Activated CD8-positive, alpha-beta T cell treated with anti-CD3 and anti-CD28 coated beads, Interleukin-2, amount 10 ng/mL, durations not matched to agents 7 days and 5 days (primary cell): ENCODE measurements at regions of chr17 and their contacts with region 1.

Region 1: DNA sequence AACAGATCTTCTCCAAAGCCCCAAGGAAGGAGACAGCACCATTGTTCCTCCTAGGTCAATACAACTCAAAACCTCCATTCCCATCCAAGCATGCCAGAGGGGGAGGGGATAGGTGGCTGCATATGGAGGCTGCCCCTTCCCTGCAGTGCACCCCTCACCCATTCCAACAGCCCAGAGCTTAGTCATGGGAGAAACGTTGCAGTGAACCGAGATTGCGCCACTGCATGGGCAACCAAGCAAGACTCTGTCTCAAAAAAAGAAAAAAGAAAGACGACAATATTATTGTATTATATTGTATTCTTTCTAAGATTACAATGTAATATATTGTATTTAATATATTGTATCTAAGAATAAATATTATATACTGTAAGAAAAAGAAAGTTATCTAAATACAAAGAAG is 36.4 kb upstream of the CD300E start:
- DNase-seq: no peak
- ATAC-seq: no peak
- H3K4me3 Mint-ChIP-seq: no peak overlapping the region
- H3K27ac Mint-ChIP-seq: no peak overlapping the region
- H3K4me1 Mint-ChIP-seq: peaks cover 5% of the 10 kb centered on the region
- H3K27me3 Mint-ChIP-seq: peaks cover 56% of the 10 kb centered on the region

Region 2: DNA sequence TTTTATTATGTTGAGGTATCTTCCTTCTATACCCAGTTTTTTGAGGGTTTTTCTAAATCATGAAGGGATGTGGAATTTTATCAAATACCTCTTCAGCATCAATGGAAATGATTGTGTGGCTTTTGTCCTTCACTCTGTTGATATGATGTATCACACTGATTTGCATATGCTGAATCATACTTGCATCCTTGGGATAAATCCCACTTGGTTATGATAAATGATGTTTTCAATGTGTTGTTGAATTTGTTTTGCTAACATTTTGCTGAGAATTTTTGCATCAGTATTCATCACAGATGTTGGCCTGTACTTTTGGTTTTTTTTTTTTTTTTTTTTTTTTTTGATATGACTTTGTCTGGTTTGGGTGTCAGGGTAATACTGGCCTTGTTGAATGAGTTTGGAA is 151.7 kb before region 1 on chr17:
- CTCF ChIA-PET with region 1: no interaction called
- POLR2A ChIA-PET with region 1: no interaction called
- DNase-seq: no peak
- ATAC-seq: no peak
- H3K4me3 Mint-ChIP-seq: no peak overlapping the region
- H3K27ac Mint-ChIP-seq: no peak overlapping the region
- H3K4me1 Mint-ChIP-seq: no peaks in the 10 kb centered on the region
- H3K27me3 Mint-ChIP-seq: peaks cover 27% of the 10 kb centered on the region

Region 3: GRCh38 chr17:74574489-74575124 is 85.3 kb before region 1 on chr17:
- CTCF ChIA-PET with region 1: no interaction called
- POLR2A ChIA-PET with region 1: no interaction called
- DNase-seq: no peak
- ATAC-seq: no peak
- H3K4me3 Mint-ChIP-seq: no peak overlapping the region
- H3K27ac Mint-ChIP-seq: no peak overlapping the region
- H3K4me1 Mint-ChIP-seq: peaks cover 6% of the 10 kb centered on the region
- H3K27me3 Mint-ChIP-seq: peaks cover 35% of the 10 kb centered on the region

Region 4: DNA sequence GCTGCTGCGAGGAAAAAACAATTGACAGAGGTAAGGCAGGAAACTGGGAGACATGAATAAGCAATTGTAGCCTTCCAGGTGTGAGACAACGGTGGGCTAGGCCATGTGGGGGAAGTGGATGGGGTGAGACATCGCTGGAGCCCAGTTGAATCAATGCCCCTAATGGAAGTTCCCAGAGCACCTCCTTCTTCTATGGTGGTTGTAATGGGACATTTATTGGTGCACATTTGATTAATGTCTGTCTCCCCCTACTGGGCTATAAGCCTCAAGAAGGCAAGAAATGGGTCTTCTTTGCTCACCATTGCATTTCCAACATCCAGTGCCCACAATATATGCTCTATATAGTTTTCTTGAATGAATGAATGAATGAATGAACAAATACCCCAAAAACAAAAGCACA is 13.7 kb before region 1 on chr17:
- CTCF ChIA-PET with region 1: interaction called, 24 read pairs
- POLR2A ChIA-PET with region 1: no interaction called
- DNase-seq: no peak
- ATAC-seq: peak; percentile 53
- H3K4me3 Mint-ChIP-seq: no peak overlapping the region
- H3K27ac Mint-ChIP-seq: no peak overlapping the region
- H3K4me1 Mint-ChIP-seq: no peaks in the 10 kb centered on the region
- H3K27me3 Mint-ChIP-seq: peaks cover 53% of the 10 kb centered on the region

Region 5: GRCh38 chr17:74690409-74690825 is 30.5 kb after region 1 on chr17:
- CTCF ChIA-PET with region 1: interaction called, 13 read pairs
- POLR2A ChIA-PET with region 1: no interaction called
- DNase-seq: no peak
- ATAC-seq: no peak
- H3K4me3 Mint-ChIP-seq: no peak overlapping the region
- H3K27ac Mint-ChIP-seq: no peak overlapping the region
- H3K4me1 Mint-ChIP-seq: peaks cover 30% of the 10 kb centered on the region
- H3K27me3 Mint-ChIP-seq: peaks cover 31% of the 10 kb centered on the region

Region 6: GRCh38 chr17:74742153-74742515 is 82.2 kb after region 1 on chr17:
- CTCF ChIA-PET with region 1: interaction called, 284 read pairs
- POLR2A ChIA-PET with region 1: interaction called, 14 read pairs
- DNase-seq: peak; percentile 85
- ATAC-seq: peak; percentile 32
- H3K4me3 Mint-ChIP-seq: peak overlapping the region; percentile 72
- H3K27ac Mint-ChIP-seq: peak overlapping the region; percentile 97
- H3K4me1 Mint-ChIP-seq: peaks cover 93% of the 10 kb centered on the region
- H3K27me3 Mint-ChIP-seq: no peaks in the 10 kb centered on the region

Region 7: GRCh38 chr17:74770498-74771318 is 110.8 kb after region 1 on chr17:
- CTCF ChIA-PET with region 1: interaction called, 27 read pairs
- POLR2A ChIA-PET with region 1: interaction called, 3 read pairs
- DNase-seq: peak; percentile 77
- ATAC-seq: peak; percentile 78
- H3K4me3 Mint-ChIP-seq: no peak overlapping the region
- H3K27ac Mint-ChIP-seq: peak overlapping the region; percentile 61
- H3K4me1 Mint-ChIP-seq: peaks cover 46% of the 10 kb centered on the region
- H3K27me3 Mint-ChIP-seq: no peaks in the 10 kb centered on the region

Region 8: GRCh38 chr17:74790161-74791054 is 130.5 kb after region 1 on chr17:
- CTCF ChIA-PET with region 1: interaction called, 36 read pairs
- POLR2A ChIA-PET with region 1: no interaction called
- DNase-seq: no peak
- ATAC-seq: peak; percentile 19
- H3K4me3 Mint-ChIP-seq: peak overlapping the region; percentile 39
- H3K27ac Mint-ChIP-seq: peak overlapping the region; percentile 68
- H3K4me1 Mint-ChIP-seq: peaks cover 47% of the 10 kb centered on the region
- H3K27me3 Mint-ChIP-seq: no peaks in the 10 kb centered on the region

Region 9: GRCh38 chr17:74961657-74962490 is 302.0 kb after region 1 on chr17:
- CTCF ChIA-PET with region 1: interaction called, 11 read pairs
- POLR2A ChIA-PET with region 1: no interaction called
- DNase-seq: peak; percentile 89
- ATAC-seq: peak; percentile 78
- H3K4me3 Mint-ChIP-seq: no peak overlapping the region
- H3K27ac Mint-ChIP-seq: no peak overlapping the region
- H3K4me1 Mint-ChIP-seq: peaks cover 10% of the 10 kb centered on the region
- H3K27me3 Mint-ChIP-seq: peaks cover 2% of the 10 kb centered on the region